Activated B cell treated with CpG ODN at 0.5 μM for 24 hours (primary cell): ENCODE measurements at regions of chr12 and their contacts with region 1.

Region 1: DNA sequence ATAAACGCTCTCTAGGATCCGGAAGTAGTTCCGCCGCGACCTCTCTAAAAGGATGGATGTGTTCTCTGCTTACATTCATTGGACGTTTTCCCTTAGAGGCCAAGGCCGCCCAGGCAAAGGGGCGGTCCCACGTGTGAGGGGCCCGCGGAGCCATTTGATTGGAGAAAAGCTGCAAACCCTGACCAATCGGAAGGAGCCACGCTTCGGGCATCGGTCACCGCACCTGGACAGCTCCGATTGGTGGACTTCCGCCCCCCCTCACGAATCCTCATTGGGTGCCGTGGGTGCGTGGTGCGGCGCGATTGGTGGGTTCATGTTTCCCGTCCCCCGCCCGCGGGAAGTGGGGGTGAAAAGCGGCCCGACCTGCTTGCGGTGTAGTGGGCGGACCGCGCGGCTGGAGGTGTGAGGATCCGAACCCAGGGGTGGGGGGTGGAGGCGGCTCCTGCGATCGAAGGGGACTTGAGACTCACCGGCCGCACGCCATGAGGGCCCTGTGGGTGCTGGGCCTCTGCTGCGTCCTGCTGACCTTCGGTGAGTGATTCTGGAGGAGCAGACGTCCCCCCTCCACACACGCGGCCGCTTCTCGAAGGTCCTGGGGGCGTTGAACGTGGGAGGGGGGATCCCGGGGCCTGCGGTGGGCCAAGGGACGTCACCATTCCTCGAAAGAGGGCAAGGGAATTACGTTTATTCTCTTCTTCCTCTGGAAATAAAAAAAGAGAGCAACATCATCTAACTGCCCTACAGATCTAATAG is at the start of gene HSP90B1:
- DNase-seq: peak; percentile 95
- ATAC-seq: peak; percentile 69
- H3K4me3 Mint-ChIP-seq: peak within 1 kb of the TSS; percentile 89
- H3K27ac Mint-ChIP-seq: peak within 1 kb of the TSS; percentile 97
- H3K4me1 Mint-ChIP-seq: peaks cover 68% of the 10 kb centered on the region
- H3K27me3 Mint-ChIP-seq: no peaks in the 10 kb centered on the region
- CTCF ChIP-seq: no peak
- total RNA-seq, gene HSP90B1: 346 and 368 TPM in 2 replicates

Region 2: DNA sequence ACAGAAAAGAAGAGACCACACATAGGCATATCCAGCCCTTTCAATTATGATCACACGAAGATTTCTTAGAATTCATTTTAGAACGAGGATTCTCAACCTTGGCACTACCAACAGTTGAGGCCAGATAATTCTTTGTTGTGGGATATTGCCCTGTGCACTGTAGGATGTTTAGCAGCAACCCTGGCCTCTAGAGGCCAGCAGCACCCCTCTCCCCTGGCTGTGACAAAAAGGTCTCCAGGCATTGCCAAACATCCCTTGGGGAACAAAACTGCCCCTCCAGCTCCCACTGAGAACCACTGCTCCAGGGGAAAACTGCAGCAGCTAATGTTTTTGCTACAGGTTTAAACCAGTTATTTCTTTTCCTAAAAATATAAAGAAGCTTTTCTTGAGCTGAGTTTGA is 96.3 kb before region 1 on chr12:
- CTCF ChIA-PET with region 1: no interaction called
- POLR2A ChIA-PET with region 1: interaction called, 36 read pairs
- intact Hi-C with region 1: no loop called
- DNase-seq: no peak
- ATAC-seq: no peak
- H3K4me3 Mint-ChIP-seq: no peak overlapping the region
- H3K27ac Mint-ChIP-seq: no peak overlapping the region
- H3K4me1 Mint-ChIP-seq: peaks cover 68% of the 10 kb centered on the region
- H3K27me3 Mint-ChIP-seq: no peaks in the 10 kb centered on the region
- CTCF ChIP-seq: no peak

Region 3: DNA sequence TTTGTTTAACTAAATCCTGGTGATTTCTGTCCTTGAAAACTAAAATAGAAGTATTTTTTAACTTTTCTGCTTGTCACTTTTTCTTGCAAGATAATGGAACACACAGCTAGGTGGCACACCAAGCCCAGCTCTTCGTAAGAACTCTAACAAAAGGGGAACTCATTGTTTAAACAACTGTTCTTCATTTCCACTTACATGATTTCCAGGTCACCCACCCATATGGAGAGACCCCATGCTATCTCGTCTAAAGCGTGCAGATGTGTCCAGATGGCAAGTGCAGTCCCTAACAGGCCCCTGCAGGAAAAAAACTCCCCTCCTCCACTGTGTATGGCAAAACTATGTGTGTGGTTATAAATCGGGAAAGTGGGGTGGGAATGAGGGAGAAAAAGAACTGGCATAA is 45.9 kb before region 1 on chr12:
- CTCF ChIA-PET with region 1: interaction called, 4 read pairs
- POLR2A ChIA-PET with region 1: interaction called, 42 read pairs
- intact Hi-C with region 1: loop called (anchors 1 kb)
- DNase-seq: no peak
- ATAC-seq: no peak
- H3K4me3 Mint-ChIP-seq: no peak overlapping the region
- H3K27ac Mint-ChIP-seq: no peak overlapping the region
- H3K4me1 Mint-ChIP-seq: peaks cover 17% of the 10 kb centered on the region
- H3K27me3 Mint-ChIP-seq: no peaks in the 10 kb centered on the region
- CTCF ChIP-seq: no peak

Region 4: DNA sequence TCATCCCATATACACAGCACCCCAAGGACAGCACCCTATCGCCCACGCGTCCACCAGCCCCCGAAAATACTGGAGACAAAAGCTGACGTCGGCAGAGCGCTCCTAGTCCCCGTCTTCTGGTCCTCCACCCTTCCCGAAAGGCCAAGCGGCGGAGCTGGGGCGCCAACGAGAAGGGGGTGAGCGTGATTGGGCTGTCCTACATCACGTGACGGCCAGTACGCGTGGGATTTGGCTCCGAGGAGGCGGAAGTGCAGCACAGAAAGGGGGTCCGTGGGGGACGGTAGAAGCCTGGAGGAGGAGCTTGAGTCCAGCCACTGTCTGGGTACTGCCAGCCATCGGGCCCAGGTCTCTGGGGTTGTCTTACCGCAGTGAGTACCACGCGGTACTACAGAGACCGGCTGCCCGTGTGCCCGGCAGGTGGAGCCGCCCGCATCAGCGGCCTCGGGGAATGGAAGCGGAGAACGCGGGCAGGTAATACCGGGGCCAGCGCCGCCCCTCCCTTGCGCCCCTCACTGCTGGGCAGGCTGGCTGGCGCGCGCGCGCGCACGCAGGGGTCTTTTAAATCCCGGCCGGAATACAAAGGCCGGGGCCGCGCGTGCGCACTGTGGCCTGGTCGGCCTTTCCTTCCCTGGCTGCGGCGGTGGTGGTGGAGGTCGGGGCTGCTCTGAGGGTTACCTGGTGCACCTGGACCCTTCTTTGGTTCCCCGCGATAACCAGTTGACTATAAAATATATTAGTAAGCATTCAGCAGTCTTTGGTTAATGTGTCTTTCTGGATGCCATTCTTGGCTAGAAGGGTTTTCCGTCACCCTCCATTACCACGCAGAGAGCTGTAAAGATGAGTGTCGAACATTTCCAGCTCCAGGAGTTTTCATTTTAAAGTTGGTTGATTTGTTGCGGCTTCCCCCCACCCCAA is 35.6 kb after region 1 on chr12 and contains the start of gene TDG:
- CTCF ChIA-PET with region 1: interaction called, 6 read pairs
- POLR2A ChIA-PET with region 1: interaction called, 151 read pairs
- intact Hi-C with region 1: loop called (anchors 1 kb)
- DNase-seq: peak; percentile 85
- ATAC-seq: peak; percentile 95
- H3K4me3 Mint-ChIP-seq: peak within 1 kb of the TSS; percentile 97
- H3K27ac Mint-ChIP-seq: peak within 1 kb of the TSS; percentile 97
- H3K4me1 Mint-ChIP-seq: peaks cover 56% of the 10 kb centered on the region
- H3K27me3 Mint-ChIP-seq: no peaks in the 10 kb centered on the region
- CTCF ChIP-seq: no peak
- total RNA-seq, gene TDG: 31.5 and 34.2 TPM in 2 replicates

Region 5: DNA sequence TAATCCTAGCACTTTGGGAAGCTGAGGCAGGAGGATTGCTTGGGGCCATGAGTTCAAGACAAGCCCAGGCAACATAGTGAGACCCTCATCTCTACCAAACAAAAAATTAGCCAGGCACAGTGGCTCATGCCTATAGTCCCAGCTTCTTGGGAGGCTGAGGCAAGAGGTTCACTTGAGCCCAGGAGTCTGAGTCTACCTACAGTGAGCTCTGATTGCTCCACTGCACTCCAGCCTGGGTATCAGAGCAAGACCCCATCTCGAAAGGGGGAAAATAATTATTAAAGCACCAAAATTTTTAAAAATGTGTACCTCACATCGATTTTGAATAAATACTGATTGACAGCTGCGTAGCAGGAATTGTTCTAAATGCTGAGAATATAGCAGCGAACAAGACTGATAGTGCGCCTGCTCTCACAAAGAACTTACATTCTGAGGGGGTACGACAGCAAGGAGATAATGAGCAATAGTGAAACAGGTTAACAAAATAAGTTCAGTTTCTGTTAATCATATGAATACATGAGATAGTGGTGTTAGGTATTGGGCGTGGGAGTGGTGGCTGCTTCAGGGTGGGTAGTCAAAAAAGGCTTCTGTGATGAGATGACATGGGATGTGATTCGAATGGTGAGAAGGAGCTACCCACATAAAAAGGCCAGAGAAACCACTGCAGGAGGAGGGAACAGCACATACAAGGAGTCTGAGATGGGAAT is 153.7 kb after region 1 on chr12:
- CTCF ChIA-PET with region 1: no interaction called
- POLR2A ChIA-PET with region 1: no interaction called
- intact Hi-C with region 1: no loop called
- DNase-seq: no peak
- ATAC-seq: no peak
- H3K4me3 Mint-ChIP-seq: no peak overlapping the region
- H3K27ac Mint-ChIP-seq: no peak overlapping the region
- H3K4me1 Mint-ChIP-seq: no peaks in the 10 kb centered on the region
- H3K27me3 Mint-ChIP-seq: no peaks in the 10 kb centered on the region
- CTCF ChIP-seq: no peak

Region 6: GRCh38 chr12:104137913-104138796 is 207.9 kb after region 1 on chr12 and contains the start of gene NFYB:
- CTCF ChIA-PET with region 1: no interaction called
- POLR2A ChIA-PET with region 1: interaction called, 35 read pairs
- intact Hi-C with region 1: loop called (anchors 1 kb)
- DNase-seq: peak; percentile 90
- ATAC-seq: peak; percentile 94
- H3K4me3 Mint-ChIP-seq: peak within 1 kb of the TSS; percentile 89
- H3K27ac Mint-ChIP-seq: peak within 1 kb of the TSS; percentile 85
- H3K4me1 Mint-ChIP-seq: peaks cover 21% of the 10 kb centered on the region
- H3K27me3 Mint-ChIP-seq: no peaks in the 10 kb centered on the region
- CTCF ChIP-seq: no peak
- total RNA-seq, gene NFYB: 17.0 and 17.1 TPM in 2 replicates